Activated CD4-positive, alpha-beta T cell treated with anti-CD3 and anti-CD28 coated beads for 36 hours (primary cell): ENCODE measurements at regions of chr15 and their contacts with region 1.

Region 1: DNA sequence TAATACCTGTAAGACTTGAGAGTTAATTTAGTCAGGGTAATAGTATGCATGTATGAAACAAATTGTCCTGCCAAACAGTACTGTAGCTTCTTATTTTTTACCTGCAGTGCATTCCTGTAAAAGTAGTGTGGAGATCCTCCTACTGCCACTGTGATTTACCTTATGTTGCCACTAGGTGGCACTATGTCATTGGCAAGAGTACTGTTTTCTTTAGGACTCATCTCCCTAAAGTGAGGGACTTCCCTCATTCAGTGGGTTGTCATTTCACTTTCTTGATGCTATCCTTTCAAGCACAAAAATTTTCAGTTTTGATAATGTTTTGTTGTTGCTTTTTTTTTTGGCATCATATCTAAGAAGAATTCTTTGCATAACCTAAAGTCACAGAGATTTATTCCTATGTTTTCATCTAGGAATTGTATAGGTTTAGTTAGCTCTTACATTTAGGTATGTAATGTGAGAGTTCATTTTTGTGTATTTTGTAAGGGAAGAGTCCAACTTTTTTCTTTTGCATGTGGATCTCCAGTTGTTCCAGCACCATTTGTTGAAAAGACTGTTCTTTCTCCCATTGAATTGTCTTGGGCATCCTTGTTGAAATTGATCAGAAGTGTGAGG is 105.7 kb downstream of the AKAP13 start:
- DNase-seq: peak; percentile 74
- ATAC-seq: peak; percentile 92
- H3K4me3 Mint-ChIP-seq: no peak overlapping the region
- H3K27ac Mint-ChIP-seq: peak overlapping the region; percentile 23
- H3K4me1 Mint-ChIP-seq: peaks cover 73% of the 10 kb centered on the region
- H3K27me3 Mint-ChIP-seq: no peaks in the 10 kb centered on the region

Region 2: DNA sequence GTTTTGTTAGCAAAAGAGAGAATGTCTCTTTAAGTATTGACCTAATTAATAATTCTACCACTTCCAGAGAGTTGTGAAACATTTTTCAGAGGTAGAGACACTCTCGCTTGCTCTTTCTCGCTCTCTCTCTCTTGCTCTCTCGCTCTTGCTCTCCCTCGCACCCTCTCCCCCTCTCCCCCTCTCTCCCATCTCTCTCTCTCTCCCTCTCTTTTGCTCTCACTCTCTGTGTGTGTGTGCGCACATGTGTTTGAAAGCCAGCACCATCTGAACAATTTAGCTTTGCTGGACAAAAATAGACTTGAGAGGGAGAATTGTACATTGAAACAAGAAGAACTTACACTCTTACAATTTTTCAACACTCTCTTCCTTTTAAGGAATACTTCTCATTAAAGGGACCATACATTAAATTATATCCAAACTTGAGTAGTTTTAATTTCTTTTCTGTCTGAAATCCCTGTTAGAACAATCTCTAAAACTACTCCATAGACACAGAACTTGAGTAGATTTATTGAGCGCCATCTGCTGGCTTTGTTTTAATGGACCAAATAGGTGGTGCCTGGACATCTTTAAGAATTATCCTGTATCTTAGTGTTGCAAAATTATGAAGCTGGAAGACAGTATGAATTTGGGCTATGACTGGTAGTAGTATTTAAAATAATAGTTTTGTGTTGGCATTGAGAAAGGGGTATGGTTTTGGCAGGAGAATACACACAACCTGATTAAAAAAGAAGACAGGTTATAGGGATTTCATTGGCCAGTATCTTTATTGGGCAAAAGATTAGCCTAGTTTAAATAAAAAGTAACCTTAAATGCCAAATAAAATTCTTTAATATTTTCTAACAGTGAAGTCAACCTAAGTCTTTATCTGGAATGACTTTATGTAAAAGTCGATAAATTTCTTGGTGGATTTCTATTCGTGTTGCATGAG is 19.0 kb after region 1 on chr15:
- CTCF ChIA-PET with region 1: interaction called, 40 read pairs
- POLR2A ChIA-PET with region 1: no interaction called
- intact Hi-C with region 1: loop called in 1 of 2 experiments (anchors 1 kb)
- DNase-seq: peak; percentile 64
- ATAC-seq: no peak
- H3K4me3 Mint-ChIP-seq: no peak overlapping the region
- H3K27ac Mint-ChIP-seq: no peak overlapping the region
- H3K4me1 Mint-ChIP-seq: peaks cover 64% of the 10 kb centered on the region
- H3K27me3 Mint-ChIP-seq: no peaks in the 10 kb centered on the region

Region 3: GRCh38 chr15:85707519-85708338 is 221.7 kb after region 1 on chr15:
- CTCF ChIA-PET with region 1: no interaction called
- POLR2A ChIA-PET with region 1: no interaction called
- intact Hi-C with region 1: loop called in 1 of 2 experiments (anchors 5 kb)
- DNase-seq: peak; percentile 47
- ATAC-seq: peak; percentile 13
- H3K4me3 Mint-ChIP-seq: peak overlapping the region; percentile 68
- H3K27ac Mint-ChIP-seq: peak overlapping the region; percentile 96
- H3K4me1 Mint-ChIP-seq: peaks cover 90% of the 10 kb centered on the region
- H3K27me3 Mint-ChIP-seq: no peaks in the 10 kb centered on the region

Region 4: GRCh38 chr15:85831415-85832113 is 345.5 kb after region 1 on chr15:
- CTCF ChIA-PET with region 1: interaction called, 3 read pairs
- POLR2A ChIA-PET with region 1: no interaction called
- intact Hi-C with region 1: loop called in 1 of 2 experiments (anchors 1 kb)
- DNase-seq: peak; percentile 66
- ATAC-seq: peak; percentile 74
- H3K4me3 Mint-ChIP-seq: no peak overlapping the region
- H3K27ac Mint-ChIP-seq: no peak overlapping the region
- H3K4me1 Mint-ChIP-seq: no peaks in the 10 kb centered on the region
- H3K27me3 Mint-ChIP-seq: no peaks in the 10 kb centered on the region